ENCODE measurements at regions of chr5 and their contacts with region 1.

Region 1: DNA sequence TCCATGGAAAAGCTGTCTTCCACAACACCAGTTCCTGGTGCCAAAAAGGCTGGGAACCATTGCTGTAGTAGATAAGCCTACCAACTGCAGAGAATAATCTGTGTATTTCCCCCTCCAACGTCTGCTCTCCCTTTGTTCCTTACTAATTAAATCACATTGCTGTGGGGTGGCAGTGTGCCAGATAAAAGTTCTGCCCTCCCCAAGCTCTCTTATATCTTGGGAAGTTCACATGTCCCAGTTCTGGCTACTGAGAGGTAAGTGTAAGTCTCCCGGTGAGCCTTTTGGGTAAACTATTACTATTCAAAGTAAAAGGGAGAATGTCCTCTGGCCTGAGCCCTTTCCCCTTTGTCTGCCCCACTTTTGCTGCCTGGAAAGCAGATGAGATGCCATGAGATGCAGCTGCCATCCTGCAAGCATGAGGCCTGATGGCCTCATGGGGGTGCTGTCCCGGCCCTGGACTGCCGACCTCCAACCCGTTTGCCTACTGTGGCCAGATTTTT is 14.7 kb downstream of the ENC1 start:
- DNase-seq: no peak
- H3K4me3 ChIP-seq: no peak overlapping the region
- H3K27ac ChIP-seq: peak overlapping the region; percentile 94
- H3K4me1 ChIP-seq: peaks cover 88% of the 10 kb centered on the region
- H3K27me3 ChIP-seq: no peaks in the 10 kb centered on the region
- CTCF ChIP-seq: peak; percentile 48

Region 2: GRCh38 chr5:74576941-74577456 is 48.8 kb before region 1 on chr5:
- CTCF ChIA-PET with region 1: no interaction called
- POLR2A ChIA-PET with region 1: no interaction called
- intact Hi-C with region 1: loop called (anchors 2 kb)
- DNase-seq: peak; percentile 53 to 68
- H3K4me3 ChIP-seq: no peak overlapping the region
- H3K27ac ChIP-seq: peak overlapping the region; percentile 82
- H3K4me1 ChIP-seq: peaks cover 31% of the 10 kb centered on the region
- H3K27me3 ChIP-seq: no peaks in the 10 kb centered on the region
- CTCF ChIP-seq: no peak

Measured in PC-9 (cell line).